Activated B cell treated with CpG ODN at 0.5 μM for 24 hours (primary cell): ENCODE measurements at regions of chr6 and their contacts with region 1.

Region 1: GRCh38 chr6:31795616-31796298 is at the start of gene VARS1:
- DNase-seq: peak; percentile 89
- ATAC-seq: peak; percentile 89
- H3K4me3 Mint-ChIP-seq: peak within 1 kb of the TSS; percentile 98
- H3K27ac Mint-ChIP-seq: peak within 1 kb of the TSS; percentile 98
- H3K4me1 Mint-ChIP-seq: peaks cover 65% of the 10 kb centered on the region
- H3K27me3 Mint-ChIP-seq: no peaks in the 10 kb centered on the region
- CTCF ChIP-seq: no peak
- total RNA-seq, gene VARS1: 136 and 140 TPM in 2 replicates

Region 2: DNA sequence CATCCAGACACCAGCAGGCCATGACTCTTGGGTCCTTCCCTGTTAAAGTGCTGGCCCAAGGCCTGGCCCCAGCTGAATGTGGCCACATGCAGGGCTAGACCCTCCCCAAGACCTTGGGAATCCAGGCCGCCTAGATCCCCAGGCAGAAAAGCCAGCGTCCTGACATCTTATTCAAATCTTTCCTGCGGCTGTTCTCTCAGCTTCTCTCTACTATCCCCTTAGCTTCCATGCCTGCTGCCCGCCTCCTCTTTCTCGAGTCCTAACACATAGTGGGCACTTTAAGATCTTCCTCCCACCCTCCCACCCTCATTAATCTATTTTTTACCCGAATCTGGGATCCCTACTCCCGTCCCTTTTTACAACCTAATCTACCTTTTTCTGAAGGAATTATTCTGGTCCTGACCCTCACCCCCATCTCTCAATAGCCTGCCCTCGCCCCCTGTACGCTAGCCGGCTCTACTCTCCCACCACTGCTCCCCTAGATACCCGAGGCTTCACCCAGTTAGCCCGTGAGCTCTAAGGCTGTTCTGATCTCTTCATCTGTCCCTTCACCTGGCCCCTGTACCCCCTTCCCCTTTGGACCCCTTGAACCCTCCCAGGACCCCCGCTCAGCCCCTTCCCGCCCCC is 638.1 kb before region 1 on chr6 and contains the start of gene CCHCR1:
- CTCF ChIA-PET with region 1: no interaction called
- POLR2A ChIA-PET with region 1: no interaction called
- intact Hi-C with region 1: no loop called
- DNase-seq: no peak
- ATAC-seq: no peak
- H3K4me3 Mint-ChIP-seq: peak within 1 kb of the TSS; percentile 95
- H3K27ac Mint-ChIP-seq: peak within 1 kb of the TSS; percentile 90
- H3K4me1 Mint-ChIP-seq: peaks cover 30% of the 10 kb centered on the region
- H3K27me3 Mint-ChIP-seq: no peaks in the 10 kb centered on the region
- CTCF ChIP-seq: no peak
- total RNA-seq, gene CCHCR1: 32.3 and 37.6 TPM in 2 replicates

Region 3: GRCh38 chr6:31702819-31703522 is 92.8 kb before region 1 on chr6 and contains the start of gene ABHD16A:
- CTCF ChIA-PET with region 1: no interaction called
- POLR2A ChIA-PET with region 1: interaction called, 5 read pairs
- intact Hi-C with region 1: loop called (anchors 1 kb)
- DNase-seq: peak; percentile 94
- ATAC-seq: peak; percentile 93
- H3K4me3 Mint-ChIP-seq: peak within 1 kb of the TSS; percentile 99
- H3K27ac Mint-ChIP-seq: peak within 1 kb of the TSS; percentile 89
- H3K4me1 Mint-ChIP-seq: peaks cover 28% of the 10 kb centered on the region
- H3K27me3 Mint-ChIP-seq: no peaks in the 10 kb centered on the region
- CTCF ChIP-seq: no peak
- total RNA-seq, gene ABHD16A: 49.3 and 59.1 TPM in 2 replicates

Region 4: DNA sequence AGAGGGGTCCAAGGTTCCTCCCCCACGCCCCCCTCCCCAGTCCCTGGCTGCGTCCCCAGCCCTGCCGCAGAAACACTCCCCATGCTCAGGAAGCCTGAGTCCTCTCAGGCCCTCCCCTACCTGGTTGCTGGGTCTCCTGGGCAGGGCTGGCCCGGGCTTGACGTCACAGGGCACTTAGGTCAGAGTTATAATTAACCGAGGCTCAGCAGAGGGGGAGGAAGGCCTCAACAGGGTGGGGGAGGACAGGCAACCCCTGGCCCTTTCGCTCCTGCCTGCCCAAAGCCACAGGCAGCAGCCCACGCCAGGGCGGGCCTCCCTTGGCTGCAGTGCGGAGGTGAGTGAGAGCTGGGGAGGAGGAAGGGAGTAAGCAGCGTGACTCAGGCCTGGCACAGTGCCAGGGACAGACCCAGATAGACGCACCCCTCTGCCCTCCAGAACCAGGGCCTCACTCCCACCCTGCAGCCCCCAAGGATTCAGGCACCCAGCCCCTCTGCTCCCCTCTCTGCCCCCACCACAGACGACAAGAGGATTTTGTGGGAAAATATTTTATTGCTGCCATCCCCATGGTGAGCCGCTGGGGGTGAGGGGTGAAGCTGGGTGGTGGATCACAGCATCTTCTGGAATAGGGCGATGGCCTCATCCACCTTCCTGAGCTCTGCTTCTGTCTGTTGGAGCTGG is 18.6 kb before region 1 on chr6 and contains the start of gene VWA7:
- CTCF ChIA-PET with region 1: interaction called, 5 read pairs
- POLR2A ChIA-PET with region 1: interaction called, 12 read pairs
- intact Hi-C with region 1: loop called (anchors 1 kb)
- DNase-seq: peak; percentile 64
- ATAC-seq: peak; percentile 90
- H3K4me3 Mint-ChIP-seq: peak within 1 kb of the TSS; percentile 50
- H3K27ac Mint-ChIP-seq: peak within 1 kb of the TSS; percentile 72
- H3K4me1 Mint-ChIP-seq: peaks cover 30% of the 10 kb centered on the region
- H3K27me3 Mint-ChIP-seq: no peaks in the 10 kb centered on the region
- CTCF ChIP-seq: no peak
- total RNA-seq, gene VWA7: 1.6 and 2.9 TPM in 2 replicates

Region 5: DNA sequence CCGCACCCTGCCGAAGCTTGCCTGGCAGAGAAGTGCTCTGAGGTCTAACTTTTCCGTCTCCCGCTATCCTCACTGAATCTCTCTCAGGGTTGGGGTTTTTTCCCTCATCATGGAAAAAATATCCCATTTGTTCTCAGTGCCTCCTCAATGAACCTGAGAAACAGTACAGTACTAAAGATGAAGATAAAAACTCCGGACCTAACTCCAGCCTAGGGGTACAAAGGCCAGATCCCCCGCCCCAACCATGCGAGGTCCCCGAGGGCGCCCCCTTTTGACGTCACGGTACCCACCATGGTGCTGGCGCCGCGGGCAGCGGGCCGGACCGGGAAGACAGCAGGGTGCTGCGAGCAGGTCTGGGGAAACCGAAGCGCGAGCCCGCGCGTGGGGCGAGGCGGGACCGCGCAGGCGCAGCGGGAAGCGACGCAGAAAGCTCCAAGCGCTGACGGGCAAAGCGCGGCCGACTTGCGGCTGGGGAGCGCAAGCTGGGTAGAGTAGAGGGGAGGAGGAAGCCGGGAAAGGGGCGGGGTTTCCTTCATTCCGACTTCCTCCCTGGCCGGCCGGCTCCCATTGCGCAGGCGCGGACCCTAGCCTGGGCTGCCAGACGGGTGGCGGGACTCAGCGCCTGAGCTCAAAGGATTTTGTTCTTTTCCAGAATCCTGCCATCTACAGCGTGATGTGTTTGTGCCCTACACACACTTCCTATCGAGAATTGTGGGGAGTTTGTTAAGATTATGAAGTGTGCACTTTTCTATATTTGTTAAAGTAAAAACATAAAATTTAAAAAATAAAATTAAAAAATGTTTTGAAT is 10.9 kb after region 1 on chr6 and contains the start of gene LSM2:
- CTCF ChIA-PET with region 1: interaction called, 20 read pairs
- POLR2A ChIA-PET with region 1: interaction called, 62 read pairs
- intact Hi-C with region 1: loop called (anchors 1 kb)
- DNase-seq: peak; percentile 89
- ATAC-seq: peak; percentile 98
- H3K4me3 Mint-ChIP-seq: peak within 1 kb of the TSS; percentile 94
- H3K27ac Mint-ChIP-seq: peak within 1 kb of the TSS; percentile 89
- H3K4me1 Mint-ChIP-seq: peaks cover 16% of the 10 kb centered on the region
- H3K27me3 Mint-ChIP-seq: no peaks in the 10 kb centered on the region
- CTCF ChIP-seq: no peak
- total RNA-seq, gene LSM2: 61.8 and 68.6 TPM in 2 replicates

Region 6: GRCh38 chr6:31815025-31815838 is 19.5 kb after region 1 on chr6 and contains the starts of genes HSPA1A and HSPA1L:
- CTCF ChIA-PET with region 1: interaction called, 9 read pairs
- POLR2A ChIA-PET with region 1: interaction called, 37 read pairs
- intact Hi-C with region 1: loop called (anchors 2 kb)
- DNase-seq: peak; percentile 59
- ATAC-seq: peak; percentile 49
- H3K4me3 Mint-ChIP-seq: peak within 1 kb of the TSS; percentile 91
- H3K27ac Mint-ChIP-seq: peak within 1 kb of the TSS; percentile 90
- H3K4me1 Mint-ChIP-seq: peaks cover 30% of the 10 kb centered on the region
- H3K27me3 Mint-ChIP-seq: no peaks in the 10 kb centered on the region
- CTCF ChIP-seq: no peak
- total RNA-seq, gene HSPA1A: 27.1 and 28.1 TPM in 2 replicates
- total RNA-seq, gene HSPA1L: 1.2 and 2.1 TPM in 2 replicates

Region 7: DNA sequence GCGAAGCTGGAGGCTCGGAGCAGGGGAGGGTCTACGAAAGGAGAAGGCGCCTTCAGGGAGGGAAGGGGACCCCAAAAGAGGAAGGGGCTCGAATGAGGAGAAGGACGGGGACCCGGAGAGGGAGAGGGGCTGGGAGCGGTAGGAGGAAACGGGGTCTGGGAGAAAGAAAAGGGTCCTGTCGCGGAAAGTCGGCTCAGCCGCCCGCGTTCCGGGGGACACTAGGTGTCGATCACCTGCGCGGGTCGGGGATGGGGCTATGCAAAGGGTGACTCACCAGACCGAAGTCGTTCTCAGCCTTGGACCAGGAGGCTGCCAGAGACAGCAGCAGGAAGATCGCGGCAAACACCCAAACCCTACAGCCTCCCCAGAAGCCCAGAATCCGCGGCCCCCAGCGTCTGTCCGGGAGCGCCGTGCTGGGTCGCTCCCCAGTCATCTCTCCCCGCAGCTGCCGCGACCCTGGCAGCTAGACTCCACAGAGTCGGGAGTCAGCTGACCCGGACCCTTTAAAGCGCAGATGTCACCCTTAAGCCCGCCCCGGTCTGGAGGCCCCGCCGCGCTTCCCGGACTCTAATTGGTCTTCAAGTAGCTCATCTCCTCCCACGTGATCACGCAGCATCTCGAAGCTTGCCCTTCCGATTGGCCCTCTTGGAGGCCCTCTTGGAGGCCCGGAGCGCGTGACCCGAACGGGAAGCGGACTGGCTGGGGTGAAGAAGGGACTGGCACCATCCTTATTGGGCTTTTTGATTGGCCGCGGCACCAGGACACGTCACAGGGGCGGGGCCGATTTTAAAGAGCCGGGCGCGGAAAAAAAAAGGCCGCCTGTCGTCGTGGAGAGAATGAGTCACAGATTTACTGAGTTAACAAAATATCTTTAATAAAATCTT is 66.8 kb after region 1 on chr6 and contains the start of gene NEU1:
- CTCF ChIA-PET with region 1: no interaction called
- POLR2A ChIA-PET with region 1: interaction called, 7 read pairs
- intact Hi-C with region 1: loop called (anchors 2 kb)
- DNase-seq: peak; percentile 93
- ATAC-seq: peak; percentile 91
- H3K4me3 Mint-ChIP-seq: peak within 1 kb of the TSS; percentile 95
- H3K27ac Mint-ChIP-seq: peak within 1 kb of the TSS; percentile 93
- H3K4me1 Mint-ChIP-seq: peaks cover 21% of the 10 kb centered on the region
- H3K27me3 Mint-ChIP-seq: no peaks in the 10 kb centered on the region
- CTCF ChIP-seq: no peak
- total RNA-seq, gene NEU1: 18.3 and 19.2 TPM in 2 replicates